ENCODE measurements at regions of chr20 and their contacts with region 1.

Region 1: GRCh38 chr20:49219089-49219923 is at the start of gene DDX27:
- DNase-seq: peak; percentile 98 to 99 (median 99)
- H3K4me3 ChIP-seq: peak within 1 kb of the TSS; percentile 77 to 94 (median 92)
- H3K4me3 Mint-ChIP-seq: peak within 1 kb of the TSS; percentile 89 to 99
- H3K27ac ChIP-seq: peak within 1 kb of the TSS; percentile 79 to 97
- H3K27ac Mint-ChIP-seq: peak within 1 kb of the TSS; percentile 94 to 99 (median 98)
- H3K4me1 ChIP-seq: peaks cover 21 to 24% of the 10 kb centered on the region in 2 donors
- H3K4me1 Mint-ChIP-seq: peaks cover 23% of the 10 kb centered on the region
- H3K27me3 ChIP-seq: no peaks in the 10 kb centered on the region
- H3K27me3 Mint-ChIP-seq: peaks cover 0 to 2% (median 0%) of the 10 kb centered on the region in 3 donors
- CTCF ChIP-seq: no peak
- polyA plus RNA-seq, gene DDX27: 13.8 to 31.5 (median 17.7) TPM

Region 2: DNA sequence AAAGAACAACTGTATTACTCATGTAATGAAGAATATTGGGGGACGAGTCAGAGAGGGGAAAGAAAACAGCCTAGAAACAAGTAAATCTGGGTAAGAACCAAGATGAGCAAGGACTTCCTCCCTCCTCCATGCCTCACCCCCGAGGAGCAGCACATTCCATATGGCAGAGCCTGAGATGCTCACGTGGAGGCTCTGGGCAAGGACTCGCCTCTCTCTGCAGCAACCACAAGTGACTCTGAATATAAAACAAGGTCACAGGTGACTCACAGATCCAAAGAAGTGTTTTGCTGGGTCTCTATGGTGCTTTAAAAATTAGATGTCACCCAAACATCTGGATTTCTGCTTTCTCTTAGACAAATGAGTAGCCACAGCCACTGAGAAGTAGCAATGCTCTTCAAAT is 981.0 kb before region 1 on chr20:
- intact Hi-C with region 1: no loop called
- DNase-seq: no peak
- H3K4me3 ChIP-seq: no peak overlapping the region
- H3K4me3 Mint-ChIP-seq: no peak overlapping the region
- H3K27ac ChIP-seq: no peak overlapping the region
- H3K27ac Mint-ChIP-seq: no peak overlapping the region
- H3K4me1 ChIP-seq: no peaks in the 10 kb centered on the region
- H3K4me1 Mint-ChIP-seq: no peaks in the 10 kb centered on the region
- H3K27me3 ChIP-seq: no peaks in the 10 kb centered on the region
- H3K27me3 Mint-ChIP-seq: peaks cover 7 to 18% (median 12%) of the 10 kb centered on the region in 3 donors
- CTCF ChIP-seq: no peak

Region 3: GRCh38 chr20:49078296-49078695 is 141.0 kb before region 1 on chr20:
- intact Hi-C with region 1: no loop called
- DNase-seq: no peak
- H3K4me3 ChIP-seq: no peak overlapping the region
- H3K4me3 Mint-ChIP-seq: no peak overlapping the region
- H3K27ac ChIP-seq: no peak overlapping the region
- H3K27ac Mint-ChIP-seq: no peak overlapping the region
- H3K4me1 ChIP-seq: no peaks in the 10 kb centered on the region
- H3K4me1 Mint-ChIP-seq: no peaks in the 10 kb centered on the region
- H3K27me3 ChIP-seq: no peaks in the 10 kb centered on the region
- H3K27me3 Mint-ChIP-seq: no peaks in the 10 kb centered on the region
- CTCF ChIP-seq: no peak

Region 4: DNA sequence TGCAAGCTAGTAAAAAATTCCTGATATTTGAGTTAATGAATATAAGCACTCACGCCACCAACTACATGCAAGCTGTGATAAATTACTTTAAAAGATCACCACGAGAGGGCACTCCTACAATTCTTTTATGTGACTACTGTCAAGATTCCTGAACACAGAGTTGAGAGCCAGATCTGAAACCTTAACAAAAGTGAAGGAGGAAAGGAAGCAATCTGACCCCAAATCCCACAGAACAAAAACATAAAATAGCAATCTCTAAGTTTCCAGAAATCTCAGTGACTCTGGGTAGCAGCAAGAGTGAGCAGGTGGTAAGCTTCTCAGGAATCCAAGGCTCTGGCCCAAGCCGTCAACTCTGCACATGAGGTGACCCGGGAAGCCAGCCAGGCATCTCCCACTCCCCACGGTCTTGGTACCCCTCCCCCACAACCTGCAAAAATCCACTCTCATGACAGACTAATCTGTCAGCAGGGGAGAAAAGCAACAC is 86.3 kb before region 1 on chr20:
- intact Hi-C with region 1: loop called (anchors 1 to 10 kb)
- DNase-seq: peak; percentile 19 to 45 (median 26)
- H3K4me3 ChIP-seq: no peak overlapping the region
- H3K4me3 Mint-ChIP-seq: no peak overlapping the region
- H3K27ac ChIP-seq: peak overlapping the region in 1 of 2 donors; percentile 24
- H3K27ac Mint-ChIP-seq: peak overlapping the region in 1 of 7 donors; percentile 9
- H3K4me1 ChIP-seq: no peaks in the 10 kb centered on the region
- H3K4me1 Mint-ChIP-seq: no peaks in the 10 kb centered on the region
- H3K27me3 ChIP-seq: no peaks in the 10 kb centered on the region
- H3K27me3 Mint-ChIP-seq: no peaks in the 10 kb centered on the region
- CTCF ChIP-seq: peak; percentile 53

Region 5: GRCh38 chr20:49187330-49188168 is 31.8 kb before region 1 on chr20:
- intact Hi-C with region 1: loop called (anchors 2 kb)
- DNase-seq: peak in 2 of 3 donors; percentile 5 to 10
- H3K4me3 ChIP-seq: peak overlapping the region; percentile 50 to 98 (median 89)
- H3K4me3 Mint-ChIP-seq: peak overlapping the region; percentile 88 to 96
- H3K27ac ChIP-seq: peak overlapping the region; percentile 68 to 70
- H3K27ac Mint-ChIP-seq: peak overlapping the region; percentile 83 to 96 (median 91)
- H3K4me1 ChIP-seq: peaks cover 13 to 20% of the 10 kb centered on the region in 2 donors
- H3K4me1 Mint-ChIP-seq: peaks cover 27% of the 10 kb centered on the region
- H3K27me3 ChIP-seq: no peaks in the 10 kb centered on the region
- H3K27me3 Mint-ChIP-seq: peaks cover 0 to 5% (median 0%) of the 10 kb centered on the region in 3 donors
- CTCF ChIP-seq: no peak

Region 6: GRCh38 chr20:49245921-49246740 is 26.8 kb after region 1 on chr20:
- intact Hi-C with region 1: no loop called
- DNase-seq: peak; percentile 14 to 29 (median 25)
- H3K4me3 ChIP-seq: no peak overlapping the region
- H3K4me3 Mint-ChIP-seq: no peak overlapping the region
- H3K27ac ChIP-seq: no peak overlapping the region
- H3K27ac Mint-ChIP-seq: peak overlapping the region in 3 of 7 donors; percentile 32 to 56 (median 48)
- H3K4me1 ChIP-seq: no peaks in the 10 kb centered on the region
- H3K4me1 Mint-ChIP-seq: peaks cover 6% of the 10 kb centered on the region
- H3K27me3 ChIP-seq: no peaks in the 10 kb centered on the region
- H3K27me3 Mint-ChIP-seq: no peaks in the 10 kb centered on the region
- CTCF ChIP-seq: peak; percentile 73

Region 7: DNA sequence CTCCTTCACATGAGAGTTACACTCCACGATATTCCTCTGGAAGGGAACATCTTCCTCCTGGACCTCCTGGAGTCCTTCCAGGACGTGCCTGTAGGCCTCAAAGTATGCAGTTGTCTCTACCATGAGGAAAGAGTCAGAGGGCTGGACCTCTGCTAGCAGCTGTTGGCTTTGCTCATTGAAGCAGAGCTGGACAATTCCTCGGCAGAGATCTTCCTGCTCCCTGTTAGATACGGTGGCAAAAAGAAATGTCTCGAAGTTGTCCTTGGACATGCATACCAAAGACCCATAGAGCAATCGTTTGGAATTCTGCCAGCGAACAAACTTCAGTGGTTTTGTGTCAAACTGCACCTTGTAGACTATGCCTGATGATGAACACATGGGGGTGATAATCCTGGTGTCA is 50.9 kb after region 1 on chr20:
- intact Hi-C with region 1: loop called in 1 of 2 experiments (anchors 5 kb)
- DNase-seq: no peak
- H3K4me3 ChIP-seq: no peak overlapping the region
- H3K4me3 Mint-ChIP-seq: peak overlapping the region in 1 of 2 donors; percentile 19
- H3K27ac ChIP-seq: peak overlapping the region in 1 of 2 donors; percentile 32
- H3K27ac Mint-ChIP-seq: peak overlapping the region in 3 of 7 donors; percentile 51 to 74 (median 66)
- H3K4me1 ChIP-seq: peaks cover 10 to 42% of the 10 kb centered on the region in 2 donors
- H3K4me1 Mint-ChIP-seq: peaks cover 50% of the 10 kb centered on the region
- H3K27me3 ChIP-seq: no peaks in the 10 kb centered on the region
- H3K27me3 Mint-ChIP-seq: peaks cover 0 to 1% (median 0%) of the 10 kb centered on the region in 3 donors
- CTCF ChIP-seq: no peak